CD8-positive, alpha-beta T cell (primary cell): ENCODE measurements at regions of chr9 and their contacts with region 1.

Region 1: DNA sequence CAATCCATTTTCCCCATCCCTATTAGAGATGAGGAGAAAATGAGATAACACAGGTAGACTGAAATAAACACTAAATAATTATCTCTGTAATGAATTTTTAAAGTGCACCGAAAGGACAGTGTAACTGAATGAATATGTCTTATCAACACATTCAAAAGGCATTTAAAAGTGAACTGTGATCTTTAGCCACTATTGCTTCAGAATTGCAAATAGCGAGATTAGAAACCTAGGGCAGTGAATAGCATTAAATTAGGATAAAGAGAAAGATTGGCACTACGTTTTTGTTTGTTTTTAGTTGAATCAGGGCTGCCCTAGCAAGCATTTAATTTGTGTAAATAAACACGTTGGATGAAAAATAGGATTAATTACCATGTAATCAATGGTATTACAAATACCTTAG is 537.5 kb downstream of the ELAVL2 start:
- DNase-seq: no peak
- ATAC-seq: no peak
- H3K4me3 ChIP-seq: no peak overlapping the region
- H3K4me3 Mint-ChIP-seq: no peak overlapping the region
- H3K27ac ChIP-seq: no peak overlapping the region
- H3K27ac Mint-ChIP-seq: no peak overlapping the region
- H3K4me1 ChIP-seq: no peaks in the 10 kb centered on the region
- H3K4me1 Mint-ChIP-seq: no peaks in the 10 kb centered on the region
- H3K27me3 ChIP-seq: no peaks in the 10 kb centered on the region
- H3K27me3 Mint-ChIP-seq: no peaks in the 10 kb centered on the region
- CTCF ChIP-seq: no peak

Region 2: DNA sequence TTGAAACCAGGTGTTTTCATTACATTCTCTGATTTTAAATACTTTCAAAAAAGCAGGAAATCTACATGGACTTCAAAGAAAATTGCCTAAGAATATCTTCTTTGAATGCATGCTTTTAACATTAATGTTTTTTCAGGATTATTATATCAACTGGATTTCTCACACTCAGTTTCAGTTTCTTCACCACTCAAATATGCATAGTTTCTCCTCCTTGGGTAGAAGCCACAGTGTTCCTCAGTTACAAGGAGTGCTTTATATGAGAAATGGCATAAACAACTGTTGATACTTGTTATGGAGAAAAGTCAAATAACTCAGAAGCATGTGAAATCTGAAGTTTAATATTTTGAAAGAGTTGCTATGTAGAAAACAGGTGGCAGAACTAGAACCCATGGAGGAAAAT is 645.0 kb before region 1 on chr9:
- CTCF ChIA-PET with region 1: no interaction called
- POLR2A ChIA-PET with region 1: no interaction called
- intact Hi-C with region 1: no loop called
- DNase-seq: no peak
- ATAC-seq: no peak
- H3K4me3 ChIP-seq: no peak overlapping the region
- H3K4me3 Mint-ChIP-seq: no peak overlapping the region
- H3K27ac ChIP-seq: no peak overlapping the region
- H3K27ac Mint-ChIP-seq: no peak overlapping the region
- H3K4me1 ChIP-seq: no peaks in the 10 kb centered on the region
- H3K4me1 Mint-ChIP-seq: no peaks in the 10 kb centered on the region
- H3K27me3 ChIP-seq: no peaks in the 10 kb centered on the region
- H3K27me3 Mint-ChIP-seq: no peaks in the 10 kb centered on the region
- CTCF ChIP-seq: no peak

Region 3: GRCh38 chr9:23229890-23230317 is 58.6 kb before region 1 on chr9:
- CTCF ChIA-PET with region 1: no interaction called
- POLR2A ChIA-PET with region 1: no interaction called
- intact Hi-C with region 1: loop called in 1 of 2 experiments (anchors 10 kb)
- DNase-seq: no peak
- ATAC-seq: no peak
- H3K4me3 ChIP-seq: no peak overlapping the region
- H3K4me3 Mint-ChIP-seq: no peak overlapping the region
- H3K27ac ChIP-seq: no peak overlapping the region
- H3K27ac Mint-ChIP-seq: no peak overlapping the region
- H3K4me1 ChIP-seq: no peaks in the 10 kb centered on the region
- H3K4me1 Mint-ChIP-seq: no peaks in the 10 kb centered on the region
- H3K27me3 ChIP-seq: no peaks in the 10 kb centered on the region
- H3K27me3 Mint-ChIP-seq: no peaks in the 10 kb centered on the region
- CTCF ChIP-seq: no peak